Tibial artery (tissue), 4 donors: ENCODE measurements at regions of chr9 and their contacts with region 1.

Region 1: GRCh38 chr9:113807173-113808061 is 68.7 kb upstream of the ZNF618 start:
- DNase-seq: peak in 1 of 2 donors; percentile 55
- H3K4me3 ChIP-seq: no peak overlapping the region
- H3K27ac ChIP-seq: peak overlapping the region in 1 of 2 donors; percentile 45
- H3K4me1 ChIP-seq: peaks cover 0 to 16% (median 12%) of the 10 kb centered on the region in 4 donors
- H3K27me3 ChIP-seq: no peaks in the 10 kb centered on the region
- CTCF ChIP-seq: peak; percentile 88 to 91

Region 2: GRCh38 chr9:112750111-112750767 is 1057.2 kb before region 1 on chr9 and contains the start of gene SNX30:
- intact Hi-C with region 1: no loop called
- DNase-seq: peak; percentile 87 to 95
- H3K4me3 ChIP-seq: peak within 1 kb of the TSS; percentile 94 to 97
- H3K27ac ChIP-seq: peak within 1 kb of the TSS; percentile 86 to 92
- H3K4me1 ChIP-seq: peaks cover 0 to 48% (median 34%) of the 10 kb centered on the region in 4 donors
- H3K27me3 ChIP-seq: no peaks in the 10 kb centered on the region
- CTCF ChIP-seq: peak in 1 of 2 experiments; percentile 12

Region 3: GRCh38 chr9:113876151-113876992 is 69.0 kb after region 1 on chr9 and contains the start of gene ZNF618:
- intact Hi-C with region 1: loop called (anchors 5 kb)
- DNase-seq: peak in 1 of 2 donors; percentile 71
- H3K4me3 ChIP-seq: peak within 1 kb of the TSS; percentile 87 to 96
- H3K27ac ChIP-seq: peak within 1 kb of the TSS; percentile 84 to 88
- H3K4me1 ChIP-seq: peaks cover 0 to 41% (median 14%) of the 10 kb centered on the region in 4 donors
- H3K27me3 ChIP-seq: no peaks in the 10 kb centered on the region
- CTCF ChIP-seq: peak; percentile 33 to 53

Region 4: DNA sequence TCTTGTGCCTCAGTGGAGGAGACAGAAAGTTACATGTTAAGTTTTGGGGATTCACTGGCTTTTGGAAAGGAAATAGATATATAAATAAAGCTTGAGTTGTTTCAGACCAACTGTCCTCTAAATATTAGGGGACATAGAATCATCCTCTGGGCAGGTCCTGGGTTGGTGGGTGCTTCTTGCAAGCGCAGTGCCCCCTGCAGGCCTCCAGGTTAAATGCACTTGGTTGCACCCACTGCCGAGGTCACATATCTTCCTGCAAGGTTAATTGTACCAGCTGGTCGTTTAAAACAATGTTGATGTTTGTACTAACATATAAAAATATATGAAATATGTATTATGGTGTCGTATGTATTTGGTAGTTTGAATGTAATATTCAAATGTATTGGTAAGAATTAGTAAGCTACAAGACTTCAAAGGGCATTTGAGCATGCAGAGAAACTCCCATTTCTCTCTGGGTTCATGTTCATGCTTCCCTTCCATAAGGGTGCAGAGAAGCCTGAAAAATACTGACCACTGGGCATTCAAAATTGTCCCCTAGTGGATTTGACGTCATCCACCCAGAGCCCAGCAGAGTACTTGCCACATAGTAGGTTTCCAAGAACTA is 155.7 kb after region 1 on chr9:
- intact Hi-C with region 1: loop called (anchors 2 kb)
- DNase-seq: no peak
- H3K4me3 ChIP-seq: no peak overlapping the region
- H3K27ac ChIP-seq: no peak overlapping the region
- H3K4me1 ChIP-seq: peaks cover 0 to 31% (median 7%) of the 10 kb centered on the region in 4 donors
- H3K27me3 ChIP-seq: no peaks in the 10 kb centered on the region
- CTCF ChIP-seq: peak; percentile 52 to 55

Region 5: DNA sequence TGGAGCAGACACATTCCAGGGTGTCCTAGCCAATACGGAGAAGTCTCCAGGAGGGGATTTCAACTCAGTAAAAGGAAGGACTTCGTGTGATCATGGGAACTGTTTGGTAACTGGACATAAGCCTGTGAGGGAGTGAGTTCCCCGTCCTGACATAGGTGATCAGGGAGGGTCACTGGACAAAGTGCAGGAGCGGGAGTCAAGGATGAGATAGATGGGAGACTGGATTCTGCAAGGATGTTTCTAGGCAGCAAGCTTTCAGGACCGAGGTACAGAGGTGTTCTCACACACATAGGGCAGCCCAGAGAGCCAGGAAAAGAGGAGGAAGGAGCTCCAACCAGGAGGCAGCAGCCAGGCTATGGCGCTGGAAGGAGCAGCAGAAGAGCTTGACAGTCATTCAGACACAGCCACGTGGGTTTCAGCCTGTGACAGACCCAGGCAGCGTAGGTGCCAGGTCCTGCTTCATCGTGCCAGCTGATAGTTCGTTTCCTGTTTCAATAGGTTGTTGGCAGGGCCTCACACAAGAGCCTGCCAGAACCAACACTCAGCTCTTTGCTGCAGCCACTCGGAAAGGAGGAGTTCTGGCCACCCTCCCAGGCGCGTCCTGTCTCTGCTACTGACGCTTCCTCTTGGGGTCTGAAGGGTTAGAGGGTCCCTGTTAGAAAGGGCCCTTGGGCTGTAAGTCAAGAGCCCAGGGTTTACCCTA is 186.6 kb after region 1 on chr9:
- intact Hi-C with region 1: loop called (anchors 5 kb)
- DNase-seq: peak; percentile 88 to 96
- H3K4me3 ChIP-seq: no peak overlapping the region
- H3K27ac ChIP-seq: peak overlapping the region in 1 of 2 donors; percentile 21
- H3K4me1 ChIP-seq: peaks cover 3 to 79% (median 53%) of the 10 kb centered on the region in 4 donors
- H3K27me3 ChIP-seq: no peaks in the 10 kb centered on the region
- CTCF ChIP-seq: no peak

Region 6: DNA sequence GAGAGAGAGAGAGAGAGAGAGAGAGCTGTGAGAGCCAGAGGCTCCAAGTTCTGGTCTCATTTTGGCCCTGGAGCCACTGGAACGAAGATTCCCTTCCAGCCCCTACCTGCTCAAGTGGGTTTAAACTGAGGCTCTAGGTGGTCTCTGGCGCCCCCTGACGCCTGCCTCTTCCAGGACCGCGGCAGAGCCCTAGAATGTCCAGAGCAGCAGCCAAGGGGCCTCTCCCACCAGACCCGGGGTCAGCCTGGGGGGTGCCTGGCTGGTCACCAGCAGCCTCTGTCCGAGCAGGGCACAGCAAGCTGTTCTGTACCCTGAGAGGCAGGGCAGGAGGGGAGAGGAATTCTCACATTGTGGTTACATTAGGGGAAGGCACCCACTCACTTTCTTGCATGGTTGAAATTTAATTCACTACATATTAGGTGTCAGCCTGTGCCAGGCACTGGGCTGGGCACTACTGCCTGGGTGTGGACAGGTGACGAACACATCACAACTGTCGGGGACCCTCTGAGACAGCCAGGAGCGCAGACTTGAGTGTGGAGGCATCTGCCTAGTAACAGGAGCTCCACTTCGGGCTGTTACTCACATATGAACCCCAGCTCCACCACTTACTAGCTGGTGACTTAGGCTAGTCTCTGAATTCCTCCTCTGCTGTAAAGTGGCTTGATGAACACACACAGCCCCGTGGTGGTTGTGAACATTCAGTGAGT is 226.1 kb after region 1 on chr9:
- intact Hi-C with region 1: loop called (anchors 5 kb)
- DNase-seq: peak in 1 of 2 donors; percentile 65
- H3K4me3 ChIP-seq: no peak overlapping the region
- H3K27ac ChIP-seq: no peak overlapping the region
- H3K4me1 ChIP-seq: peaks cover 0 to 22% (median 4%) of the 10 kb centered on the region in 4 donors
- H3K27me3 ChIP-seq: no peaks in the 10 kb centered on the region
- CTCF ChIP-seq: peak; percentile 52 to 58